ENCODE measurements at regions of chr4 and their contacts with region 1.

Region 1: DNA sequence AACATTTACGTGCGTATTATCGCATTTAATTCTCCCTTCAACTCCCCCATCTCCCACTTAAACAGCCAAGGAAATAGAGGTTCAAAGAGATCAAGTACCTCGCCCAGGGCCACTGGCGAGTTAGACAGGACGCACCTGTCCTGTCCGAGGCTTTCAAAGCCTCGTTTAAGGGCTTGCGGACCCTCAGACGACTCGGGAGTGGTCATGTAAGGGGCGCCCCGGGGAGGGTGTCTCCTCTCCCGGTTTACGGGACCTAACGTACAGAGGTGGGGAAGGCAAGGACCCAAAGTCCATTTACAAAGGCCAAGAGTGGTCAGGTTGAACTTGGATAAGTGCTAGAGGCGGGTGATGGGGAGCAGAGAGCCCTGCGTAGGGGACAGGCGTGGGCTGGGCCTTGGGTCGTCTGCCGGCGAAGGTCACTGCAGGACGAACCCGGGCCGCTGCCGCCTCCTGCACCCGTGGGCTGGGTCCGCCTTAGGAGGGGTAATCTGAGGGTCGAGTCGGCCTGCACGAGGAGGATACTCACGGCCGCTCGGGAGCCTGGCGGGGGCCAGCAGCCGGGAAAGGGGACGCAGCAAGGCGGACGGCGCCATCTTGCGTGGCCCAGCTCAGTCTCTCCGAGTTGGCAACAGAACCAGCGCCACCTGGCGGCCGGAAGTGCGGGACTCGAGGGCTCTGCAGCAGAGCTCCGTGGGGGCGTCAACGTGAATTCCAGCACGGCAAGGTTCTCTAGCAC is 5.9 kb upstream of the NAA15 start:
- DNase-seq: peak; percentile 95 to 100
- ATAC-seq: peak; percentile 89

Region 2: DNA sequence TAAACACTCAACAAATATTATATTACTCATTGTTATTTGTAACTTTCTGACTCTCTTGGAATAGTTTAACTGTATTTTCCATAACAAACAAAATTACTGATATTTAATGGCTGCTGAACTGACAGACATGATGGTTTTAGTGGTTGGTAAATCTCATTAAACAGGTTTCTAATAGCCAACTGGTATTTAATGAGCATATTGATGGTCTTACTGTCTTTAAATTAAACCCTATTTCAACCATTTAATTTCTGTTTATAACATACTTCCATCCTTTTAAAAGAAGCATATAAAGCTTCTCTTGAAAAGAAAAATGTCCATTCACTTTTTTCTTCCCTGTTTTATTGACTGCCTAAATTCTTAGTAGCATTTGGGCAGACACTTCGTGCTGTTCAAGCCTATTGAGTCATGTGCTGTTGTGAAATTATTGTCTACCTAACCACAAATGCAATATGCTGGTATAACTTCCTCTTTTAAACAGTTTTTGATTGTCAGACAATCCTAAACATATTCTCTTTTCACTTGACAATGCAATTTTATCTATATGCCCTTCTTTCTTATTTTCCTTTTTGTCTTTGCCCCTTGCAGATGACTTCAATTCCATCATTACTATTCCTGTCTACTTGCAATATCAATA is 889.3 kb before region 1 on chr4:
- intact Hi-C with region 1: no loop called
- DNase-seq: no peak
- ATAC-seq: no peak

Region 3: GRCh38 chr4:138835832-138836533 is 459.4 kb before region 1 on chr4:
- intact Hi-C with region 1: no loop called
- DNase-seq: peak; percentile 62 to 71
- ATAC-seq: peak; percentile 98

Region 4: DNA sequence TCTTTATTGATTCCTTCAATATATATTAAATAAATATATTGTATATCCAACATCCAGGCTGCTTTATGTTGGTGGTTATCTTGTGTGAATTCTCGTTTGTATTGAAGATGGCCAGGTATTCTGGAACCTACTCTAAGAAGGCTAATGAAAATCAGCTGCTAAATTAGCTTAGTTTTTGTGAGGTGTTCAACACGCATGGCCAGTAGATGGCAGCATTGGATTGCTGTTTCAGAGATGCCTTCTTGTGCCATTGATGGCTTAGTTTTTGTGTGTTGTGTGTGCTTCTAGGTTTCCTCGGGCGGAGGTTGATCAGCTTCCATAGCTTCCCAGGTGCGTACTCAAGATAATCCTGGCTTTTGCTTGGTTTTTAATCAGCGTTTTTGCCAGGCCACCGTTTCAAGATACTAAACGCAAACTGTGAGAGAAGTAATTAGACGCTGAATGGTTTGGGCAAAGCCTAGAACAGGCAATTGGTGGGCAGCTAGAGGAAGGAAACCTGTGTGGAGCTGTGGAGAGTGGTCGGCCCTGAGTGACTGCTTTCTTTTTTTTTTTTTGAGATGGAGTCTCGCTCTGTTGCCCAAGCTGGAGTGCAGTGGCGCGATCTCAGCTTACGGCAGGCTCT is 264.6 kb before region 1 on chr4:
- intact Hi-C with region 1: loop called in 1 of 2 experiments (anchors 10 kb)
- DNase-seq: peak; percentile 66 to 74
- ATAC-seq: peak; percentile 85

Region 5: GRCh38 chr4:139083956-139084803 is 211.2 kb before region 1 on chr4:
- intact Hi-C with region 1: loop called in 1 of 2 experiments (anchors 10 kb)
- DNase-seq: peak; percentile 92 to 93
- ATAC-seq: peak; percentile 77

Region 6: GRCh38 chr4:139184129-139184528 is 111.2 kb before region 1 on chr4:
- intact Hi-C with region 1: loop called in 1 of 2 experiments (anchors 10 kb)
- DNase-seq: no peak
- ATAC-seq: no peak

Region 7: DNA sequence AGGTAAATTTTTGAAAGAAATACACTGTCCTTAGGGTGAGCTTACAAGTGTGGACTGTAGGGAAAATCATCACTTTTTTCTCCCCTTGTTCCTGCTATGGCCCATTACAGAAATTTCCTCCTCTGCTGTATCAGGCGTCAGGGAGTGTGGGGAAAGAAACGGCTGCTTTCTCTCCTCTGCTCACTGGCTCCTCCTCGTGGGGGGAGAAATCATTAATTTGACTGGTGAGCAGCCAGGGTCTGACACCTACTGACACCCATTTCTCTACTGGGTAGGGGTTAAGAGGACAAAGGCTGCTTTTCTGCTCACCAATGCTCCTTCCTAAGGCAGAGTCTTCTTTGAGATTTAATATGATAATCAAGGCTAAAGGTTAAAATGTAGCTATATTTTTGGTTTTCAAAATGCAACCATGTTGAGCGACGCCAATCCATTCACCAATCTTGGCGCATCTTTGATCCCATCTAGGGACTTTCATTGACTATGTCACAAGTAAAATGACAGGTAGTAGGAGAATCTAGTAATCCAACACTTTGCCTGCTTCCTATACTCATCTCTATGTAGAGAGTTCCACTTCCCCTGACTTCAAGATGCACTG is 235.6 kb after region 1 on chr4:
- intact Hi-C with region 1: no loop called
- DNase-seq: peak in 1 of 2 donors; percentile 59
- ATAC-seq: peak; percentile 78